Gastrocnemius medialis (tissue), 4 donors: ENCODE measurements at regions of chr5 and their contacts with region 1.

Region 1: GRCh38 chr5:134527146-134527960 is 1.9 kb downstream of the JADE2 start:
- DNase-seq: peak; percentile 62 to 78
- ATAC-seq: peak; percentile 39 to 42
- H3K4me3 ChIP-seq: peak overlapping the region; percentile 71 to 78 (median 72)
- H3K27ac ChIP-seq: peak overlapping the region; percentile 93 to 97 (median 96)
- H3K4me1 ChIP-seq: peaks cover 44 to 49% of the 10 kb centered on the region in 2 donors
- H3K27me3 ChIP-seq: no peaks in the 10 kb centered on the region
- CTCF ChIP-seq: peak; percentile 96 to 98 (median 97)
- POLR2A ChIP-seq: peak; percentile 54 to 59

Region 2: DNA sequence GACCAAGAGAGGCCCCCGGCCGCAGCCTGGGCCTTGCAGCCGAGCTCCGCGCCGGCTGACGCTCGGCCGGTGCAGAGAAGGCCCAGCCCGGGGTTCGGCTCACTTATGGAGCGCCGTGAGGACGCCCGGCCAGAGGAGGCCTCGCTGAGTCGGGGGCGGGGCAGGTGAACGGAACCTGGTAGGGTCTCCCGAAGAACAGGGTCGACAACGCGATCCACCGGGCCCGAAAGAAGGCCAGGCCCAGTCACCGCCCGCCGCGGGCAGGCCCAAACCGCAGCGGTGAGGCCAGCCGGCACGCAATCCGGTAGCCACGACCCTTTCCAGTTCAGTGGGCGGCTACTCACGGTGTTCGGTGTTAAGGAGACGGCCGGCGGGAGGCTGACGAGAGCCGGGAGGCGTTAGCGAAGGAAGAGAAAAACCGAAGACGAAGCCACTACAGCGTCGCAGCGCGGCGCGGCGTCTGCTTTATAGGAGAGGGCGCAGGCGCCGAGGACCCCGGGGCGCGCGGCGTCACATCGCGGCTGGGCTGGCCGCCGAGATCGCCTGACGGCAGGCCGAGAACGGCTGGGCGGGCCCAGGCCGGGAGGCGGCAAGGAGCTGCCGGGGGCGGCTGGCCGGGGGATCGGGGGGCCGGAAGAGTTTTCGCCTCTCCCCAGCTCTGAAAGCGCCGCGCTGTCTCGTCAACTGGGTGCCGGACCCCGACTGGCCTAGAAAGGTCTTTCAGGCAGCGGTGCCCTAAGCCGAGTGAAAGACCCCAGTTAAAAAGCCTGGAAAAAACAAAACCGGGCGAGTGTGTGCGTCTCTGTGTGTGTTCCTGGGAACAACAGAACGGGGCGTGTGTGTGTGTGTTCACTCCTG is 350.6 kb before region 1 on chr5 and contains the start of gene SKP1:
- in situ Hi-C with region 1: no loop called
- intact Hi-C with region 1: loop called (anchors 5 kb)
- DNase-seq: peak; percentile 68 to 77
- ATAC-seq: peak; percentile 72 to 76
- H3K4me3 ChIP-seq: peak within 1 kb of the TSS; percentile 96 to 99 (median 98)
- H3K27ac ChIP-seq: peak within 1 kb of the TSS; percentile 93 to 99 (median 96)
- H3K4me1 ChIP-seq: peaks cover 45 to 46% of the 10 kb centered on the region in 2 donors
- H3K27me3 ChIP-seq: no peaks in the 10 kb centered on the region
- CTCF ChIP-seq: no peak
- POLR2A ChIP-seq: peak; percentile 96 to 97
- total RNA-seq, gene SKP1: 318 to 499 (median 476) TPM

Region 3: GRCh38 chr5:134465816-134466240 is 61.5 kb before region 1 on chr5:
- in situ Hi-C with region 1: no loop called
- intact Hi-C with region 1: loop called (anchors 2 kb)
- DNase-seq: peak; percentile 82 to 93
- ATAC-seq: peak; percentile 68
- H3K4me3 ChIP-seq: peak overlapping the region; percentile 59 to 72 (median 62)
- H3K27ac ChIP-seq: peak overlapping the region; percentile 93 to 99 (median 98)
- H3K4me1 ChIP-seq: peaks cover 26 to 43% of the 10 kb centered on the region in 2 donors
- H3K27me3 ChIP-seq: no peaks in the 10 kb centered on the region
- CTCF ChIP-seq: peak in 3 of 5 experiments; percentile 15 to 27 (median 20)
- POLR2A ChIP-seq: peak; percentile 88 to 92

Region 4: DNA sequence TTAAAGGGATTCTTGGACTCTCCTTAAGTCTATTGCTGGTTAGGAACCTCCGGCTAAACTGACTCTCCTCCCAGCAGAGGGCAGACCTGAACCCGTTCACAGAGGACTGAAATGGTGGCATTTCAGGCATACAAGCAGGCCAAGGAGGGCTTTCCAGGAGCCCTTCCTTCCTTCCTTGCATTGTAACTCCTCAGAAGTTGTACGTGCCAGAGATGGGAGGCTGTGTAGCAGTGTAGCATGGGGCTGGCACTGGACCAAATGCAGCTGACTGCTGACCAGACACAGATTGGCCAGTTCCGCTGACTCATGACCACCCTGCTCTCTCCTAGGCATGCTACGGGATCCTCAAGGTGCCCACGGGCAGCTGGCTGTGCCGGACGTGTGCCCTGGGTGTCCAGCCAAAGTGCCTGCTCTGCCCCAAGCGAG is 34.5 kb after region 1 on chr5:
- in situ Hi-C with region 1: no loop called
- intact Hi-C with region 1: no loop called
- DNase-seq: no peak
- ATAC-seq: peak; percentile 51 to 53
- H3K4me3 ChIP-seq: no peak overlapping the region
- H3K27ac ChIP-seq: no peak overlapping the region
- H3K4me1 ChIP-seq: peaks cover 3 to 9% of the 10 kb centered on the region in 2 donors
- H3K27me3 ChIP-seq: no peaks in the 10 kb centered on the region
- CTCF ChIP-seq: peak in 4 of 5 experiments; percentile 7 to 41 (median 20)
- POLR2A ChIP-seq: no peak

Region 5: DNA sequence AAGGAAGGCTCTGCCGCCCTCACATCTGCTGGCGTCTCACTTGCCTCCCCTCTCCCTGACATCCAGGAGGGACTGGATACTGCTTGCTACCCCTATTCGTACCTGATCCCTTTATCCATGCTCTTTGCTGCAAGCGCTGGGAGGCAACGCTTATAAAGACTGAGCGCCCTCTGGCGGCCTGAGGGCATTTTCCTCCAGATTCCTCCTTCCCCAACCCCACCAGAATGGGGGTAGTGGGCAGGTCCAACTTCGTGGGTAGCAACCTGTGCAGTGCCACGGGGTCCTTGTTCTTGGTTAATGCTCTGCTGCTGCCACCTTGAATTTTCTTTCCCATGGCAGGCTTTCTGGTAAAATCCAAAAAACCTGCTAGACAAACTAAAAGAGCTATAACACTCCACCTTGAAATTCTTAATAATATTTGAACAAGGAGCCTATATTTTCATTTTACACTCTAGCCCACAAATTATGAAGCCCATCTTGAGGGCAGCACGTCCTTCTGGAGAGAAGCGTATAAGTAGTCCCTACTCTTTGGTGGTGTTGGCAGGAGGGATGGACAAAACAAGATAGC is 50.5 kb after region 1 on chr5:
- in situ Hi-C with region 1: loop called in 3 of 4 experiments (anchors 5 to 10 kb)
- intact Hi-C with region 1: loop called (anchors 1 kb)
- DNase-seq: peak; percentile 31 to 69
- ATAC-seq: peak; percentile 53 to 57
- H3K4me3 ChIP-seq: no peak overlapping the region
- H3K27ac ChIP-seq: peak overlapping the region in 1 of 4 donors; percentile 7
- H3K4me1 ChIP-seq: peaks cover 27 to 38% of the 10 kb centered on the region in 2 donors
- H3K27me3 ChIP-seq: no peaks in the 10 kb centered on the region
- CTCF ChIP-seq: peak; percentile 80 to 87 (median 86)
- POLR2A ChIP-seq: no peak

Region 6: DNA sequence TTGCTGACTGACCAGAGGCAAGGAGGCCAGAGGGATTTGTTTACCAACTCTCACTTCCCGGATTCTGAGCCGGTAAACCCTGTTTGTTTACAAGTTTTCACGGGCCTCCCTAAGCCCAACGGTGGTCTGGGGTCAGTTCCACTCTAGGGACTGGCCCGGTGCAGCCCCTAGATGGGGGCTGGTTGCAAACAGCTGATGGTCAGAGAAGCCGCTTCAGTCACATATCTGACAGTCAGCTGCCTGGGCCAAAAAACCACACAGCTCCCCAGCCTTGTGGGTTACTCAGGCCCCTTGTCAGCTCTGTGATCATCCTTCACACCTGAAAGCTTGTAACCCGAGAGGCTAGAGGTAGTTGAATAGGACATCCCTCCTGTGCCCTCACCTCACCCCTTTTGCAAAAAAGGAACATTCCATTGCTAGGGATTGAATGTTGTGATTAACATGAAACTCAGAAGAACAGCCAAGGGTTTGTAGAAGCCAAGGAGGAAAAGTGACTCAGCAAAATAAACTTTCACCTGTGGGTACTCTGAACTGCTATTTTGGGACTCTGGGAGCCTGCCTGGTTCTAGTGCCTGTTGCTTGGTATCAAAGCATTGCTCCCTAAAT is 64.9 kb after region 1 on chr5:
- in situ Hi-C with region 1: no loop called
- intact Hi-C with region 1: no loop called
- DNase-seq: peak; percentile 79 to 82
- ATAC-seq: peak; percentile 82 to 86
- H3K4me3 ChIP-seq: no peak overlapping the region
- H3K27ac ChIP-seq: peak overlapping the region; percentile 81 to 94 (median 92)
- H3K4me1 ChIP-seq: peaks cover 44 to 56% of the 10 kb centered on the region in 2 donors
- H3K27me3 ChIP-seq: no peaks in the 10 kb centered on the region
- CTCF ChIP-seq: no peak
- POLR2A ChIP-seq: peak in 1 of 2 donors; percentile 19

Region 7: DNA sequence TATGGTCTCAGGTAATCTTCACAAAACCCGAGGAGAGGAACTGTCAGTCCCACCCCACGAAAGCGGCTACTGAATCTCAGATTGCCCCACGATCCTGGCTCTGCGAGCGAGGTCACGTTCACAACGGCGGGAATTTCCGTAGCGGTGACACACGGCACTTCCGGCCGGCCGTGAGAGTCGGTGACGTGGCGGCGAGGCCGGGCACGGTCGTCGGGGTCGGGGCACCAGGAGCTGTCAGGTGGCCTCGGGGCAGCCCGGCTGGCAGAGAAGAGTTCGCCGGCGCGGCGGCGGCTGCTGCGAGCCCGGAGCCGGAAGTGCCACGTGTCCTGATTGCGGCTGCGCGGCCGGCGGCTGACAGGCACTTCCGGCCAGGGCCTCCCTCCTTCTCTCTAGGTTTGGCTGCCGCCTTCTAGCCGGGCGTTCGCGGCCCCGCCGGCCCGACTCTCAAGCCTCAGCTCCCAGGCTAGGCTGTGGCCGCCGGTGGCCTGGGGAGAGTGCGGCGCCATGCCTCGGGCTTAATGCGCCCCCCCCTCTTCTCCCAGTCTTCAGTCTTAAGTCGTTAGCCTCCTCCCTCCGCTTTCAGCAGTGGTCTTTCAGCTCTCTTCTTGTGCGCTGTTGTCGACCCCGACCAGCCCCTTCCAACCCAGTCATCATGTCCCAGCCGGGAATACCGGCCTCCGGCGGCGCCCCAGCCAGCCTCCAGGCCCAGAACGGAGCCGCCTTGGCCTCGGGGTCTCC is 121.2 kb after region 1 on chr5 and contains the start of gene SEC24A:
- in situ Hi-C with region 1: no loop called
- intact Hi-C with region 1: loop called (anchors 2 kb)
- DNase-seq: peak; percentile 94 to 97
- ATAC-seq: peak; percentile 88
- H3K4me3 ChIP-seq: peak within 1 kb of the TSS; percentile 90 to 100 (median 94)
- H3K27ac ChIP-seq: peak within 1 kb of the TSS; percentile 98 to 100 (median 98)
- H3K4me1 ChIP-seq: peaks cover 23 to 35% of the 10 kb centered on the region in 2 donors
- H3K27me3 ChIP-seq: no peaks in the 10 kb centered on the region
- CTCF ChIP-seq: no peak
- POLR2A ChIP-seq: peak; percentile 80 to 86
- total RNA-seq, gene SEC24A: 11.4 to 18.3 (median 13.6) TPM

Region 8: DNA sequence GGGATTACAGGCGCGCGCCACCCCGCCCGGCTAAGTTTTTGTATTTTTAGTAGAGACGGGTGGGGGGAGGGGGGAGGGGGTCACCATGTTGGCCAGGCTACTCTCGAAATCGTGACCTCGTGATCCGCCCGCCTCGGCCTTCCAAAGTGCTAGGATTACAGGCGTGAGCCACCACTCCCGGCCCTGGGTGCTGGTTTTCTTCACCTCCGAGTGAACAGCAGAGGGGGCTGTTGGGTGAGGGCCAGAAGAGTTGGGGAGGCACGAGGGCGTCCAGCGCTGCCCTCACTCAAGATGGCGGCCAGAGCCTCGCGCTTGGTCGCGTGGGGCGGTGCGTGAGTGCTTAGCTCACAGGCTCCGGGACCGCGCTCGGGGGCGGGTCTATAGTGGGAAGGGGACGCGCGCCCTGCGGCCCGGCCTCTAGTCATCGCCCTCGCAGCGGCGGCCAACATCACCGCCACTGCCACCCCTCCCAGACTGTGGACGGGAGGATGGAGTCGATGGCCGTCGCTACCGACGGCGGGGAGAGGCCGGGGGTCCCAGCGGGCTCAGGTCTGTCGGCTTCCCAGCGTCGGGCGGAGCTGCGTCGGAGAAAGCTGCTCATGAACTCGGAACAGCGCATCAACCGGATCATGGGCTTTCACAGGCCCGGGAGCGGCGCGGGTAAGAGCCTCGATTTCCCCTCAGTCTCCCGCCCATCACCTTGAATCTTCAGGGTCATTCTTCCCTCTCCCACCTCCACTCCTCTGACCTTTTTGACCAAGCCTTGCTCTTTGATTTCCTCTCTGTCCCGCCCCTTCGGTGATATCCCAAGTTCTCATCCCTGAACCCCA is 211.0 kb after region 1 on chr5 and contains the start of gene CAMLG:
- in situ Hi-C with region 1: no loop called
- intact Hi-C with region 1: loop called (anchors 5 kb)
- DNase-seq: peak; percentile 97
- ATAC-seq: peak; percentile 88 to 91
- H3K4me3 ChIP-seq: peak within 1 kb of the TSS; percentile 94 to 100 (median 97)
- H3K27ac ChIP-seq: peak within 1 kb of the TSS; percentile 87 to 99 (median 96)
- H3K4me1 ChIP-seq: peaks cover 8 to 14% of the 10 kb centered on the region in 2 donors
- H3K27me3 ChIP-seq: no peaks in the 10 kb centered on the region
- CTCF ChIP-seq: peak in 3 of 5 experiments; percentile 46 to 58 (median 53)
- POLR2A ChIP-seq: peak; percentile 92 to 95
- total RNA-seq, gene CAMLG: 30.8 to 51.6 (median 39.2) TPM